ENCODE measurements at regions of chr16 and their contacts with region 1.

Region 1: DNA sequence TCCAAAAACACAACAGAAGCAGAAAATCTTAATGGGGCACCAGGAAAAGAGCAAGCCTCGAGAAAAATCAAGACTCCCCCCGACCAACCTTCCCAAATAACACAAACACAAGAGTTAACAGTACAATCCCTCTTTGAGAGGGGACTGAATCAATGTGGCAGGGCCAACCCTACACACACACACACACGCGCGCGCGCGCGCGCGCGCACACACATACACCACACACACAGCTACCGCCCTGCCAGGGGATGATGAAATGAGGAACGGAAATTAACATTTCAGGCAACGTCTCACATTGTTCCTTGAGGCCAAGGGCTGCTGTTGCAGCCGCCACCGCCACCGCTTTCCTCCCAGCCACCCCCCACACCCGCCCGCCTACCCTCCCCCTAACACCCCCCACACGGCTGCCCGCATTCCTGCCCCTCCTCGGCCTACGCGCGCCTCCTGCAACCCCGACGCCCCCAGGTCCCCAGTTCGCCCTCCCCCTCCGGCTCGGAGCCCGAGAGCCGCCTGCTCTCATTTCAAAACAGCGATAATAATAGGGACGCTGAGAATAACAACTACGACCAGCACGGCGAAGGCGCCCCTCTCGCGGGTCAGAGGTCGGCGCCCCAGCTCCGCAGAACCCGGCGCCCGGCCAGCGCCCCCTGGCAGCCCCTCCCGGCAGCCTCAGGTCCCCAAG is 1.2 kb downstream of the ANKRD11 start:
- DNase-seq: peak; percentile 94 to 96
- H3K4me3 ChIP-seq: peak overlapping the region; percentile 80 to 100
- H3K27ac ChIP-seq: peak overlapping the region; percentile 94
- H3K4me1 ChIP-seq: peaks cover 0 to 64% (median 37%) of the 10 kb centered on the region in 4 donors
- H3K27me3 ChIP-seq: no peaks in the 10 kb centered on the region
- CTCF ChIP-seq: peak; percentile 51 to 54

Region 2: DNA sequence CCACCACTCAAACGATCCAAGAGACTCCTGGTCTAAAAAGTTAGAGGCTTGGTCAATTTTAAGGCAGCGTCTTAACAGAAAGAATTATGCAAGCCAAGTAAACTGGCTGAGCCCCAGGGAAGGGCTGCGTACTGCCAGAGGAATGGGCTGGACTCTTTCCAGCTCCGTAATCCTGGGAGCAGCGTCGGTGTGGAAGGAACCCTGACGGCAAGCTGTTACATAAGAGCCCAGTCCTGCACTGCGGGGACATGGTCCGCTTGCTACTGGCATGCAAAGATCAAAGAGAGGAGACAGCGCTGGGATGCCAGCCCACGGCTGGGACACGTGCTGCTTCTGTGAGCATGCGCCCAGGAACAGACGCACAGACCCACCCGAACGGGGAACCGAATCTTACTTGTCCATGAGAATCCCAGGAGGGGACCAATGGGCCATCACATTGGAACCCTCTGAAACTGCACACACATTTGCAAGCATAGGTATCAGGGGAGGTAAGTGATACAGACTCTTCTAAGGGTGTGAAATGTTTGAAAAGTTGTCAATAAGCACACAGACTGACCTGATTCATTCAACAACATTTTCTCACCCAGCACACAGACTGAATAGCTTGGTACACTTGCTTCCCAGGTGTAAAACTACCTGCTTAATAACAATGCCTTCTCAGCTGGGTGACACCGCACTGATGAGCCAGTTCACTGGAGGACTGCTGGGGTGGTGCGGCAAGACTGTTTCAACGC is 93.9 kb before region 1 on chr16:
- intact Hi-C with region 1: loop called (anchors 10 kb)
- DNase-seq: peak; percentile 93 to 96
- H3K4me3 ChIP-seq: no peak overlapping the region
- H3K27ac ChIP-seq: peak overlapping the region in 1 of 2 donors; percentile 65
- H3K4me1 ChIP-seq: peaks cover 0 to 47% (median 27%) of the 10 kb centered on the region in 4 donors
- H3K27me3 ChIP-seq: no peaks in the 10 kb centered on the region
- CTCF ChIP-seq: no peak

Region 3: GRCh38 chr16:89556750-89557689 is 67.8 kb after region 1 on chr16:
- intact Hi-C with region 1: loop called (anchors 5 kb)
- DNase-seq: peak in 1 of 2 donors; percentile 74
- H3K4me3 ChIP-seq: no peak overlapping the region
- H3K27ac ChIP-seq: no peak overlapping the region
- H3K4me1 ChIP-seq: peaks cover 0 to 22% (median 12%) of the 10 kb centered on the region in 4 donors
- H3K27me3 ChIP-seq: no peaks in the 10 kb centered on the region
- CTCF ChIP-seq: peak; percentile 52 to 66